B cell (primary cell): ENCODE measurements at regions of chr17 and their contacts with region 1.

Region 1: DNA sequence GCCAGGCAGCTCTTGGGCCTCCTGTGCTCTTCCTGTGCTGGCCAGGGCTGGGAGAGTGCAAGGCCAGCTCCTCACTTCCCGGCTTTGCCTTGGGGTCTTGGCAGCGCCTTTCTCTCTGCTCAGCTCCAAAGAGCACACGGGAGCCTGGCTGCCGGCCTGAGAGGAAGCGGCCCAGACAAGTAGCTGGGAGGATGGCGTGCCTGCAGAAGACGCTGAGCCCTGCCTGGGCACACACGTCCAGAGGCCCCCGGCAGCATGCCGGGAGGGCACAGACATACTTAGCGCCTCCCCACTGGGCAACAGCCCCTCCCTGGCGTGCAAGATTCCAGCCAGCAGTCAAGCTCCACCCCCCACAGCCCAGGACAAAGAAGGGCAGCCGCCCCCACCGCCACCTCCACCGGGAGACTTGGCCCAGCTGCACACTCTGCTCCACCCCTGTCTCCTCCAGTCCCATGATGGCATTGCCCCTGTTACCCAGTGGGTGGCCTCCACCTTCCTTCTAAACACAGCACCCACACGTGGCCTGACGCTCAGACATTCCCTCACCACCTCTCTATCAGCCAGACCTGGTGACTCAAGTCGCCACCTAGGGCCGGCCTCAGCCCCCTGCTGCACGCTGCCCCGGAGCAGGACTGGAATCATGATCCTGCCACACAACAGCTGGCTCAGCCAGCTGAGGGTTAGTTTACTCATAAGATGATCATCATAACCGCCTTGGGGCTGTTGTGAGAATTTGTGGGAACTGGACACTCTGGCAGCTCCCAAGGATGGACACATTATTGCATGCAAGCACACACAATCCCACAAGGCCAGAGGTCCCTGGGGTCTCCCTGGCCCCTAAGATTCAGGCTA is 12.4 kb downstream of the SGCA start:
- DNase-seq: peak; percentile 75
- ATAC-seq: peak; percentile 98
- H3K4me3 ChIP-seq: peak overlapping the region in 2 of 5 experiments; percentile 25 to 29
- H3K4me3 Mint-ChIP-seq: peak overlapping the region; percentile 59
- H3K27ac ChIP-seq: no peak overlapping the region
- H3K27ac Mint-ChIP-seq: no peak overlapping the region
- H3K4me1 ChIP-seq: peaks cover 7 to 14% of the 10 kb centered on the region in 2 donors
- H3K4me1 Mint-ChIP-seq: peaks cover 21% of the 10 kb centered on the region
- H3K27me3 ChIP-seq: no peaks in the 10 kb centered on the region
- H3K27me3 Mint-ChIP-seq: no peaks in the 10 kb centered on the region
- CTCF ChIP-seq: peak; percentile 60

Region 2: GRCh38 chr17:50114849-50115357 is 63.3 kb before region 1 on chr17:
- CTCF ChIA-PET with region 1: interaction called, 17 read pairs
- POLR2A ChIA-PET with region 1: no interaction called
- intact Hi-C with region 1: no loop called
- DNase-seq: peak; percentile 66
- ATAC-seq: peak; percentile 20
- H3K4me3 ChIP-seq: no peak overlapping the region
- H3K4me3 Mint-ChIP-seq: peak overlapping the region; percentile 48
- H3K27ac ChIP-seq: no peak overlapping the region
- H3K27ac Mint-ChIP-seq: no peak overlapping the region
- H3K4me1 ChIP-seq: peaks cover 10 to 20% of the 10 kb centered on the region in 2 donors
- H3K4me1 Mint-ChIP-seq: peaks cover 14% of the 10 kb centered on the region
- H3K27me3 ChIP-seq: peaks cover 0 to 46% (median 16%) of the 10 kb centered on the region in 4 experiments
- H3K27me3 Mint-ChIP-seq: peaks cover 45% of the 10 kb centered on the region
- CTCF ChIP-seq: peak; percentile 72

Region 3: DNA sequence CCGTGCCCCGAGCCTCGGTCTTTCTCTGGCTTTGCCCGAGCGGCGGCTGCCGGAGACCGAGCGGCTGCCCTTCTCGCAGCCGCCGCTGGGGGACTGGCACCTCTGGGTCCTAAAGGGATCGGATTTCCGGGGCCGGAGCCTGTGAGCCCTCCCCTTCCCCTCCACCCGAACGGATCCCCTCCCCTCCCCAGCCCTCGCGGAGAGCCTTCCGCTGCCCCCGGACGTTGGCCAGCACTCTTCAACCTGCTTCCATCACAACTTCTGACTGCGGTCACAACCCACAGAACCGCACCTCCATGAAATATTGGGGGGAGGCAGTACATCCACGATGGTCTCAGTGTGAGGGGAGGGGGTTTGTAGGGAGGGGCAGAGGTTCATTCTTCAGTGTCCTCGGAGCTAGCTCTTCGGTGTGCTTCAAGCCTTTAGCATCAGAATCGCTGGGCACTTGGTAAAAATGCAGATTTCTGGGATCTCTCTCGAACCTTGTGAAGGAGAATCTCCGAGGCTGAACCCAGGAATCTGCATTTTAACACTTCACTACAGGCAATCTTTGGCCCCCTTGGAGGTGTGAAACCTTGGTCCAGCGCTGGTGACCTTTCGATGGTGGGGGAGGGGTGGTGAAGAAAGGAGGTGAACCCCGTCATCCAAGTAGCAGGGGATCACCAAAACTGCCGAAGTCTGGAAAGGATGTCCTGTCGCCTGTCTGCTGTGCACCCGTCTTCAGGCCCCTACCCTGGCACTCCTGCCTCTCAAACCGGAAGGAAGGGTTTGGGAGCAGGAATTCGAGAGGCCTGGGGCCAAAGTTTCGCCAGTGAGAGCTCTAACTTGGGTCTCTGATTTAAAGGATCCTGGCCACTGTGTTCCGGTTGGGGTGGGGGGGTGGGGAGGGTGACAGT is 26.9 kb before region 1 on chr17:
- CTCF ChIA-PET with region 1: interaction called, 10 read pairs
- POLR2A ChIA-PET with region 1: interaction called, 3 read pairs
- intact Hi-C with region 1: no loop called
- DNase-seq: peak; percentile 90
- ATAC-seq: peak; percentile 48
- H3K4me3 ChIP-seq: peak overlapping the region; percentile 70 to 97 (median 85)
- H3K4me3 Mint-ChIP-seq: peak overlapping the region; percentile 95
- H3K27ac ChIP-seq: peak overlapping the region; percentile 48 to 75
- H3K27ac Mint-ChIP-seq: peak overlapping the region; percentile 94
- H3K4me1 ChIP-seq: peaks cover 17 to 46% of the 10 kb centered on the region in 2 donors
- H3K4me1 Mint-ChIP-seq: peaks cover 37% of the 10 kb centered on the region
- H3K27me3 ChIP-seq: no peaks in the 10 kb centered on the region
- H3K27me3 Mint-ChIP-seq: no peaks in the 10 kb centered on the region
- CTCF ChIP-seq: peak; percentile 60

Region 4: GRCh38 chr17:50161023-50161910 is 16.9 kb before region 1 on chr17:
- CTCF ChIA-PET with region 1: interaction called, 18 read pairs
- POLR2A ChIA-PET with region 1: no interaction called
- intact Hi-C with region 1: no loop called
- DNase-seq: peak; percentile 93
- ATAC-seq: peak; percentile 92
- H3K4me3 ChIP-seq: peak overlapping the region; percentile 52 to 68 (median 66)
- H3K4me3 Mint-ChIP-seq: peak overlapping the region; percentile 80
- H3K27ac ChIP-seq: no peak overlapping the region
- H3K27ac Mint-ChIP-seq: peak overlapping the region; percentile 72
- H3K4me1 ChIP-seq: peaks cover 36 to 41% of the 10 kb centered on the region in 2 donors
- H3K4me1 Mint-ChIP-seq: peaks cover 38% of the 10 kb centered on the region
- H3K27me3 ChIP-seq: no peaks in the 10 kb centered on the region
- H3K27me3 Mint-ChIP-seq: no peaks in the 10 kb centered on the region
- CTCF ChIP-seq: peak; percentile 97

Region 5: GRCh38 chr17:50372758-50373556 is 194.7 kb after region 1 on chr17 and contains the starts of genes EME1 and MRPL27:
- CTCF ChIA-PET with region 1: no interaction called
- POLR2A ChIA-PET with region 1: no interaction called
- intact Hi-C with region 1: no loop called
- DNase-seq: peak; percentile 96
- ATAC-seq: peak; percentile 88
- H3K4me3 ChIP-seq: peak within 1 kb of the TSS; percentile 65 to 85 (median 81)
- H3K4me3 Mint-ChIP-seq: peak within 1 kb of the TSS; percentile 100
- H3K27ac ChIP-seq: peak within 1 kb of the TSS; percentile 91 to 96
- H3K27ac Mint-ChIP-seq: peak within 1 kb of the TSS; percentile 100
- H3K4me1 ChIP-seq: peaks cover 14 to 19% of the 10 kb centered on the region in 2 donors
- H3K4me1 Mint-ChIP-seq: peaks cover 23% of the 10 kb centered on the region
- H3K27me3 ChIP-seq: no peaks in the 10 kb centered on the region
- H3K27me3 Mint-ChIP-seq: no peaks in the 10 kb centered on the region
- CTCF ChIP-seq: no peak
- total RNA-seq, gene EME1: 2.3 and 3.4 TPM in 2 replicates
- total RNA-seq, gene MRPL27: 33.5 and 40.2 TPM in 2 replicates